HAP-1 (cell line): ENCODE measurements at regions of chr15 and their contacts with region 1.

Region 1: DNA sequence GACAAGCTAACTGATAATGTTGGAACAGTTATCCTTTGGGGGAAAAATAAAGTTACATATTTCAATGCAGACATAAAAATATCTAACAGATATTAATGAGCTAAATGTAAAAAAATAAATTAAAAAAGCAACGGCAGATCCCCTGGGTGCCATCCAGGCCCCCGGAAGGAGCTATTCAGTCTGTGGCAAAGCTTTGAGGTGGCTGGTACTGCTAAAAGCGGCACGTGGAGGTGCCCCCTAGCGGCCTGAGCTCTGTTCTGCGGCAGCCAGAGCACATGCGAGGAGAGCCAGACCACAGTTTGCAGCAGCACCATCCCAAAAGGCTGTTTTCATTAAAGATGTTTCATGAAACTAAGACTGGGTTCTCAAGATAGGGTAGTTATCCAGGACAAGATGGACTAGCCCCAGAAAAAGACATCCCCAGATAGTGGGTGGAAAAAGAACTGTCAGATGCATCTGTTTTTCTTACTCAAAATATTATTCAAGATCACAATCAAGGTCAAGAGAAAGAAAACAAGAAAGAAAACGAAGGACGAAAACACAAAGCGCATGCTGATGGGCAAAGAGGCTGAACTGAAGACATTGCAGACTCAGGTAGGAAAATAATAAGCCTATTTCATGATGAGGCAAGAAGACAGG is 18.7 kb downstream of the AP3S2 start:
- DNase-seq: peak; percentile 73 to 89
- H3K4me3 ChIP-seq: no peak overlapping the region
- H3K4me1 ChIP-seq: peaks cover 4% of the 10 kb centered on the region; the same call in 1 of the 2 replicates
- H3K27me3 ChIP-seq: no peaks in the 10 kb centered on the region

Region 2: DNA sequence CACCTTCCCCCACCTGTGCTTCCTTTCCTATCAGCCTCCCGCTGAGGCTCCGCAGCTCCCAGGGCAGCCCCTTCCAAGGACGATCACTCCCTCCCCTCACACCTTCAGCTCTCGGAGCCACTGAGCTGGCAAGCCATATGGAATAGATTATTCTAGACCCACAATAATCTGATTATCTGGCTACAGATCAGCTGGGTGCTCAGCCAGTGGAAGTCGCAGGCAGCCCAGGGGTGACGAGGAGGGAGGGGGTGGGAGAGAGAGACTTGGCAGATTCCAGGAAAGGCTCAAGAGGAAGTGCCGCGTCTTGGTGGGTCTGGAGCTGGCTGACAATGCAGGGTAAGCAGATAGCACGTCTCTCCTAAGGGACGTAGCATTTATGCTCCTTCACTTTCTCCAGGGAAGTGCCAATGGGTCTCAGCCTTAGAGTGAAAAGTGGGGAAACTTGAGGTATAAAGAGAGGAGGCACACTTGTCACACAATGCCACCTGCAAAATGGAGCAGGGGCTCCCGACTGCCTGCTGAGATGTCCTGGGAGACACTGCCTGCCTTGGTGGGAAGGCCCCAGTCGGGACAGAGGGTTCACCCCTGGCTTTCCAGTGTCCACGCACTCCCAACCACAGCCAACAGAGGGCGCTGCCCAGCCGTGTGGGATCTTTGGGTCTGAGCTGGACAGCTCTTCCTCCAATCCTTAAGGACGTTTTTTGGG is 114.6 kb before region 1 on chr15:
- in situ Hi-C with region 1: loop called (anchors 5 kb)
- DNase-seq: peak; percentile 51 to 90
- H3K4me3 ChIP-seq: no peak overlapping the region
- H3K4me1 ChIP-seq: no peaks in the 10 kb centered on the region
- H3K27me3 ChIP-seq: no peaks in the 10 kb centered on the region

Region 3: DNA sequence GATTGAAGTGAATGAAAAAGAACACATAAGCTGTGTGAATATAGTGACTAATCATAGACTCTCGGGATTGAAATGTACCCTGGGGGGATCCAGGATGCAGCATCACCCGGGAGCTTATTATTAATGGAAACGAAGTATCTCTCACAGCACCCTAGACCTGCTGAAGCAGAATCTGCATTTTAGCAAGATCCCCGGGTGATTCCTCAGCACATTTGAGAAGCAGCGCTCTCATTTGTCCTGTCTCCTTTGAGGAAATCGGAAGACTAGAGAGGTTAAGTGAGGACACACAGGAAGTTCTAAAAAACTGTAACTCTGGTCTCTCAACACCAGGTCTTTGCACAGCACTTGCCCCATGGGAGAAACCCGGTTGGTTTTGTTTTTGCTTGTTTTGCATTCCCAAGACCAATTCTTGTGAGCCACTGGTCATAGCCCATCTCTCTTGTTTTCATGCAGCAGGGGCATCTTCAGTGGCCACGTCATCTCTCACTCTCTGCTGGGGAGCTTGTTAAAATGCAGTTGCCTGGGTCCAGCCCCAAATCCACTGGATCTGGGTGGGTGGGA is 156.3 kb after region 1 on chr15:
- in situ Hi-C with region 1: no loop called
- DNase-seq: peak; percentile 51 to 52
- H3K4me3 ChIP-seq: no peak overlapping the region
- H3K4me1 ChIP-seq: peaks cover 8% of the 10 kb centered on the region
- H3K27me3 ChIP-seq: no peaks in the 10 kb centered on the region

Region 4: GRCh38 chr15:90086868-90087268 is 211.8 kb after region 1 on chr15:
- in situ Hi-C with region 1: loop called (anchors 10 kb)
- DNase-seq: peak; percentile 29 to 70
- H3K4me3 ChIP-seq: no peak overlapping the region
- H3K4me1 ChIP-seq: no peaks in the 10 kb centered on the region
- H3K27me3 ChIP-seq: no peaks in the 10 kb centered on the region